ENCODE measurements at regions of chr12 and their contacts with region 1.

Region 1: GRCh38 chr12:1117970-1118563 is 127.0 kb downstream of the ERC1 start:
- DNase-seq: peak; percentile 72 to 78
- H3K4me3 ChIP-seq: no peak overlapping the region
- H3K27ac ChIP-seq: no peak overlapping the region
- H3K4me1 ChIP-seq: no peaks in the 10 kb centered on the region
- H3K27me3 ChIP-seq: no peaks in the 10 kb centered on the region
- CTCF ChIP-seq: peak; percentile 90 to 91

Region 2: DNA sequence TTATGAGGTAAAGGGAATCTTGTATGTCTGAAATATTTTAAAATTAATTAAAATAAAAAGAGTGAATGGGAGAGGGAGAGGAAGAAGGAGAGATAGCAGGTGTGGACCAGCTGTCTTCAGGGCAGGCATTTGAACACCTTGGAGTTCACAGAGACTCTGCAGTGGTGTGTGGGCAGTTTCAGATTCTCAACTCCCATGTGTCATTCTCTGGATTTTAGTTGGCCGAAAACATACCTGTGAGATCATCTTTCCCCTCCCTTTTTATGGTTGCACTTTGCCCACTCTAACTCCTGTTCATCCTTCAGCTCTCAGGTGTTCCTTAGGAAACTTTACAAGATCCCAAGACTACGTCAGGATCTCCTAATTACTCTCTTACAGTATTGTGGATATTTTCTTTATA is 18.9 kb before region 1 on chr12:
- intact Hi-C with region 1: no loop called
- DNase-seq: no peak
- H3K4me3 ChIP-seq: no peak overlapping the region
- H3K27ac ChIP-seq: no peak overlapping the region
- H3K4me1 ChIP-seq: peaks cover 0 to 5% (median 0%) of the 10 kb centered on the region in 4 donors
- H3K27me3 ChIP-seq: no peaks in the 10 kb centered on the region
- CTCF ChIP-seq: no peak

Region 3: DNA sequence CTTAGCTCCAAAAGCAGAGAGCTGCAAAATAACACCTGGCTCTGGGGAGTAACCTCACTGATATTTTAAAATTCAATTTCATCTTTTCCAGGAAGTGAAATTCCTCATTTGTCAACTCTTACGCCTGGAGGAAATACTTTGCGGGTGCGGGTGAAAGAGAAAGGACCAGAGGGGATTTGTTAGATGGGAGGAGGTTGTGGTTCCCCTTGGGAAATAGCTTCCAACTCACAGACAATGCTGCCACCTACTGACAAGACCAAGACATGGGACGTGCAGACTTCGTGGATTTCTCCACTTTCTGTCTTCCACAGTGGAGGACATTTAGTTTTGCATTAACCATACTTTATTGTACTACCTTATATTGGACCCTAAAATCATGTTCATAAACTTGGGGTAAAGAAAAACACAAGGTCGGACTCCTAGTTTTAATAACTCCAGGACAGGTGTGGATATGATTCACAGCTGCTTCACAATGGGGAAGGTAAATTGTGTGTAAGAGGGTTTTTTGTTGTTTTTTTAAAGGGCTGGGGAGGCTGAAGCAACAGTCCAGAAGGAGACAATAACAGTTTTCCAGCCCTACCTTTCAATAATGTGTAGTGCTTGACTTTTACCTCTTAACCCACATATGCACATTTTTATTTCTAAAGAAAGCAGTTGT is 465.5 kb after region 1 on chr12:
- intact Hi-C with region 1: loop called (anchors 5 kb)
- DNase-seq: peak in 1 of 2 donors; percentile 80
- H3K4me3 ChIP-seq: peak overlapping the region; percentile 7 to 20
- H3K27ac ChIP-seq: no peak overlapping the region
- H3K4me1 ChIP-seq: peaks cover 0 to 26% (median 14%) of the 10 kb centered on the region in 4 donors
- H3K27me3 ChIP-seq: no peaks in the 10 kb centered on the region
- CTCF ChIP-seq: peak; percentile 82 to 89

Measured in tibial artery (tissue), 4 donors.